ENCODE measurements at regions of chr19 and their contacts with region 1.

Region 1: DNA sequence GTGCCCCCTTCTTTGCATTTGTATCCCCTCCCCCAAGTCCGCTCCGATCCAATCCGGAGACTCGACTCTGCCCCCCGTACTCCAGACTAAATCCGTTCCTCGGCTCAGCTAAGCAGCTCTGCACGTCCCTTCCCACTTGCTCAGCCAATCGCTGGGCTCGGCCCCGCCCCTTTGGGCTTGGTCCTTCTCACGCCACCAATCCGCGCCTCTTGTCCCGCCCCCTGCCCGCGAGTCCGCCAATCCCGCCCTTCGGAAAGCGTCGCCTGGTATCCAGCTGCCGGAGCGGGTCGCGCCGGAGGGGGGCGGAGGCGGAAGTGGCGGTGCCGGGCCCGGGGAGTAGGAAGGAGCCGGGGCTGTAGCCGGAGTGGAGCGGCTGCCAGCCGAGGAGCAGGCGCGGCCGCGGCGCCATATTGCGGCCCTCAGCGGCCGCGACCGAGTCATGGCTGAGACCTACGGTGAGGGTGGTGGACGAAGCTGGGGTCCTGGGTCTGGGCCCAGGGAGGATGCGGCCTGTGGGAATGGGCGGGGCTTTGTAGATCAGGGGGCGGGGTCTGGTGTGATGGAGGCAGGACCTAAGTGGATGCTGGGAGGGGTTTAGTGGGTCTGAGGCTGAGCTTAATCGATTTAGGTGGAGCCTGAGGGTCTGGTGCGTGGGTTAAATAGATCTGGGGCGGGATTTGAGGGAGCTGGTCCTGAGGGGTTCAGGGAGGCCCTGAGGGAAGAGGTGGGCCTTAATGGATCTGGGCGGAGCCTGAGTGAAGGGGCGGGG is at the start of gene RAB4B:
- DNase-seq: peak; percentile 100
- ATAC-seq: peak; percentile 74
- H3K4me3 Mint-ChIP-seq: peak within 1 kb of the TSS; percentile 98
- H3K27ac Mint-ChIP-seq: peak within 1 kb of the TSS; percentile 99
- H3K4me1 Mint-ChIP-seq: peaks cover 73% of the 10 kb centered on the region
- H3K27me3 Mint-ChIP-seq: no peaks in the 10 kb centered on the region
- CTCF ChIP-seq: no peak
- total RNA-seq, gene RAB4B: 90.6 and 98.1 TPM in 2 replicates

Region 2: GRCh38 chr19:40403262-40403984 is 374.7 kb before region 1 on chr19:
- CTCF ChIA-PET with region 1: no interaction called
- POLR2A ChIA-PET with region 1: no interaction called
- intact Hi-C with region 1: loop called (anchors 5 kb)
- DNase-seq: peak; percentile 86
- ATAC-seq: peak; percentile 81
- H3K4me3 Mint-ChIP-seq: peak overlapping the region; percentile 90
- H3K27ac Mint-ChIP-seq: peak overlapping the region; percentile 71
- H3K4me1 Mint-ChIP-seq: peaks cover 23% of the 10 kb centered on the region
- H3K27me3 Mint-ChIP-seq: peaks cover 3% of the 10 kb centered on the region
- CTCF ChIP-seq: no peak

Region 3: DNA sequence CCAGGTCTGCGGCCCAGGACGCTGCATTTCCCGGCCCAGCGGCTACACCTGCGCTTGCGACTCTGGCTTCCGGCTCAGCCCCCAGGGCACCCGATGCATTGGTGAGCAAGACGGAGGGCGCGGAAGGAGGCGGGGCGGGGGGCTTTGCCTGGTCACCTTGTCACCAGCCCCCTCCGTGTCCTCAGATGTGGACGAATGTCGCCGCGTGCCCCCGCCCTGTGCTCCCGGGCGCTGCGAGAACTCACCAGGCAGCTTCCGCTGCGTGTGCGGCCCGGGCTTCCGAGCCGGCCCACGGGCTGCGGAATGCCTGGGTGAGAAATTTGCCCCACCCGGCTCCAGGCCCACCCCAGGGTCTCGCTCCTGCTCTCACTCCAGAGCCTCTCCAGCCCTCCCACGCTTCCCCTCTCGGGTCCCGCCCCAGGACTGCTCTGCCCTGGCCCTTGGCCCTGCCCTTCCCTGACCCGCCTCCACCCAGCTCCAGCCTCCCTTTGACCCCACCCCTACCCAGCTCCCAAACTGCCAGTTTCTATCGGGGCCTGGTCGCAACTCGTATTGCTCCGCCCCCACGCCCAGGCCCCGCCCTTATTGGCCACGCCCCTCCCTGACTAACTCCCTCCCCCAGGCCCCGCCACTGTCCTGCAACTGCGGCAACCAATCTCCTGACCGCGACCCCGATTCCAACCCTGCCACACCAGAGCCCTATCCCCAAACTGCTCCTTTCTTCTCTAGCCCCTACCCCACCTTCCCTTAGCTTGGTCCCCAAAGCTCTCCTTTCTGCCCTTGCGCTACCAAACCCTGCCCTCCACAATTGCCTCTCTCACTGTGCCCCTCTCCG is 168.3 kb before region 1 on chr19:
- CTCF ChIA-PET with region 1: no interaction called
- POLR2A ChIA-PET with region 1: interaction called, 23 read pairs
- intact Hi-C with region 1: loop called (anchors 1 kb)
- DNase-seq: peak; percentile 92
- ATAC-seq: peak; percentile 54
- H3K4me3 Mint-ChIP-seq: peak overlapping the region; percentile 88
- H3K27ac Mint-ChIP-seq: peak overlapping the region; percentile 94
- H3K4me1 Mint-ChIP-seq: peaks cover 60% of the 10 kb centered on the region
- H3K27me3 Mint-ChIP-seq: no peaks in the 10 kb centered on the region
- CTCF ChIP-seq: no peak

Region 4: DNA sequence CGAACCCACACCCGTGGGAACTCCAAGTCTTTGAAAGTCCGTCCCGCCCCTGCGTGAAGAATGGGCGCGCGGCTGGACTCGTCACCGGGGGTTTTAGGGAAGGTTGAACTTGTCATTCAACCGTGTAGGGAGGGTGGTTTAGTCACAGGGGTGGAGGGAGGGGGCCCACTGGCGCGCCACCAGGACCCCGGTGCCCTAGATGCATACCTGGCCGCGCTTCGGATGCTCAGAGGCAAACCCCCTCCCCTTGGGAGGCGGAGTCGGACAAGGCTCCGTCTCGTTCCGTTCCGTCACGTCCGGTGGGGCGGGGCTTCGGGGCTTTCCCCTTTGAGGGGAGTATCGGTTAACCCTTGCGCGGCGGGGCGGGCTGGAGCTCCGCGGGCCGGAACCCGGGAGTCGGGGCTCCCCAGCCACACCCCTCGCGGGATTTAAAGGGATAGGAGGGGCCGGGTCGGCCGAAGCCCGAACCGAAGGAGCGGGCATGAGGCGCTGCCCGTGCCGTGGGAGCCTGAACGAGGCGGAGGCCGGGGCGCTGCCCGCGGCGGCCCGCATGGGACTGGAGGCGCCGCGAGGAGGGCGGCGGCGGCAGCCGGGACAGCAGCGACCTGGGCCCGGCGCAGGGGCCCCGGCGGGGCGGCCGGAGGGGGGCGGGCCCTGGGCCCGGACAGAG is 61.3 kb before region 1 on chr19 and contains the starts of genes COQ8B and ITPKC:
- CTCF ChIA-PET with region 1: no interaction called
- POLR2A ChIA-PET with region 1: interaction called, 53 read pairs
- intact Hi-C with region 1: loop called (anchors 1 kb)
- DNase-seq: peak; percentile 100
- ATAC-seq: peak; percentile 70
- H3K4me3 Mint-ChIP-seq: peak within 1 kb of the TSS; percentile 90
- H3K27ac Mint-ChIP-seq: peak within 1 kb of the TSS; percentile 95
- H3K4me1 Mint-ChIP-seq: peaks cover 63% of the 10 kb centered on the region
- H3K27me3 Mint-ChIP-seq: no peaks in the 10 kb centered on the region
- CTCF ChIP-seq: no peak
- total RNA-seq, gene COQ8B: 34.4 and 38.5 TPM in 2 replicates
- total RNA-seq, gene ITPKC: 13.0 and 13.3 TPM in 2 replicates

Region 5: GRCh38 chr19:40791349-40791748 is 13.2 kb after region 1 on chr19:
- CTCF ChIA-PET with region 1: interaction called, 18 read pairs
- POLR2A ChIA-PET with region 1: interaction called, 287 read pairs
- intact Hi-C with region 1: no loop called
- DNase-seq: no peak
- ATAC-seq: no peak
- H3K4me3 Mint-ChIP-seq: no peak overlapping the region
- H3K27ac Mint-ChIP-seq: peak overlapping the region; percentile 63
- H3K4me1 Mint-ChIP-seq: peaks cover 24% of the 10 kb centered on the region
- H3K27me3 Mint-ChIP-seq: no peaks in the 10 kb centered on the region
- CTCF ChIP-seq: no peak

Region 6: GRCh38 chr19:40813182-40813958 is 35.2 kb after region 1 on chr19:
- CTCF ChIA-PET with region 1: interaction called, 23 read pairs
- POLR2A ChIA-PET with region 1: interaction called, 50 read pairs
- intact Hi-C with region 1: no loop called
- DNase-seq: no peak
- ATAC-seq: no peak
- H3K4me3 Mint-ChIP-seq: no peak overlapping the region
- H3K27ac Mint-ChIP-seq: no peak overlapping the region
- H3K4me1 Mint-ChIP-seq: peaks cover 47% of the 10 kb centered on the region
- H3K27me3 Mint-ChIP-seq: no peaks in the 10 kb centered on the region
- CTCF ChIP-seq: no peak